Activated T-helper 2 cell treated with anti-CD3 and anti-CD28 coated beads, Interferon-gamma antibody, Interleukin-2, Interleukin-4, amounts not matched to agents 10 μg/mL and 5 μg/mL and 100 μg/mL, durations not matched to agents 14 hours and 24 hours and 36 hours (primary cell): ENCODE measurements at regions of chr14 and their contacts with region 1.

Region 1: DNA sequence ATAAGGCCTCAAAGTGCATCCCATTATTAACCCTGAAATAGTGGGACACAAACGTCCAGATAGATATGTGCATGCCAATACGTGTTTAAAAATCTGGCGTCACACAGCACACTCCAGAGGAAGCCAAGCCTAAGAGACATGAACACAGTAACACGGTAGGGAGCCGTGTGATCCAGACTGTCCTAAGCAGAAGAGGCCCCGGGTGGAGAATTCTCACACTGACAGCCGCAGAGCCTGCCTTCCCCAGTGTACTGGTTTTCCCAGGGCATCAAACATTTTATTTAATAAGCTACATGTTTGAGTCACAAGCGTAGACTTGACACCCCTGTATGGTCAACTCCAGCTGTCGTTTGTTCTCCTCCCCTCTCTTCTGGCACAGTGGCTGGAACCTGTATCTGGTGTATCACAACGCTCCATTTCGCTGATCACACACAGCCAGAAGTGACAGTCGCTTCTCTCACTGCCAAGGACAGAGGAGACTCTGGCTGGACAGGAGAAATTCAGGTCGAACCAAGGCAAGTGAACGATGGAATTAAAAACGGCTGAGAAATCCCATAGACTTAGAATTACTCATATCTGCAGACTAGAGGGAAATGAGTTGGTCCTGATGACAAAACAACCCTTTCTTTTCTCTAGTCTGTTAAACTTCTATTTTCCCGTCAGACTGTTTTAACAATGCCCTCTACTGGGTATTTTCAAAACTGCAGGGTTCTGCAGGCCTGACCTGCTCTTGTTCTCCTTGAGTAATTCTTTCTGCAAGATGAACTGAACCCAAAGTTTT is 359.9 kb downstream of the RGS6 start:
- DNase-seq: no peak
- H3K4me3 Mint-ChIP-seq: no peak overlapping the region
- H3K27ac Mint-ChIP-seq: no peak overlapping the region
- H3K4me1 Mint-ChIP-seq: no peaks in the 10 kb centered on the region
- H3K27me3 Mint-ChIP-seq: peaks cover 20% of the 10 kb centered on the region

Region 2: GRCh38 chr14:72023722-72024407 is 268.2 kb before region 1 on chr14:
- intact Hi-C with region 1: loop called (anchors 1 kb)
- DNase-seq: peak; percentile 40
- H3K4me3 Mint-ChIP-seq: no peak overlapping the region
- H3K27ac Mint-ChIP-seq: no peak overlapping the region
- H3K4me1 Mint-ChIP-seq: peaks cover 10% of the 10 kb centered on the region
- H3K27me3 Mint-ChIP-seq: peaks cover 39% of the 10 kb centered on the region

Region 3: DNA sequence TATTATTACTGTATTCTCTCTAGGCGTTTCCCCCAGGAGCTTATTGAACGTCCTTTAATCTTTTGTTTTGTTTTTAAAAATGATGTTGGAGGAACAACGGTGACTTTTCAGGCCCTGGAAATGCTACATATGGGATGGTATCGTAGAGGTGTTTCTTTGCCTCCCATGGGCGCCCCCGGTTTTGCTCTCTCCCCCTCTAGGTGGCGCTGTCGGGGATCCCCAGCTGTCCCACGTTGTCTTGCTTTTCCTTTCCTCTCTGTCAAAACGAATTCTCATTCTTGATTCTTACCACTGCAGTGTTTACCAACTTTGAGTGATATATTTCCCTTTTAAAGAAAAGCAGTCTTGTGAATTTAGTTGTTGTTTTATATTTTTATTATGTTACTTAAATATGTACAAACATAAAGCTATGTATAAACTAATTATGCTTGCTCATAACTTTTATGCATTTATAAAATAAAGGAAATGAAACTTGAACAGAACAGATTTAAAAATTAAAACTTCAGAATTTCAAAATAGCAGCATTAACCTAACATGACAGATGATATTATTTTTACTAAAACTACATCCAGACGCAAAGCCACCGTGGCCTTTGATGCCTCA is 188.0 kb before region 1 on chr14:
- intact Hi-C with region 1: loop called (anchors 2 kb)
- DNase-seq: peak; percentile 15
- H3K4me3 Mint-ChIP-seq: no peak overlapping the region
- H3K27ac Mint-ChIP-seq: no peak overlapping the region
- H3K4me1 Mint-ChIP-seq: no peaks in the 10 kb centered on the region
- H3K27me3 Mint-ChIP-seq: peaks cover 48% of the 10 kb centered on the region

Region 4: DNA sequence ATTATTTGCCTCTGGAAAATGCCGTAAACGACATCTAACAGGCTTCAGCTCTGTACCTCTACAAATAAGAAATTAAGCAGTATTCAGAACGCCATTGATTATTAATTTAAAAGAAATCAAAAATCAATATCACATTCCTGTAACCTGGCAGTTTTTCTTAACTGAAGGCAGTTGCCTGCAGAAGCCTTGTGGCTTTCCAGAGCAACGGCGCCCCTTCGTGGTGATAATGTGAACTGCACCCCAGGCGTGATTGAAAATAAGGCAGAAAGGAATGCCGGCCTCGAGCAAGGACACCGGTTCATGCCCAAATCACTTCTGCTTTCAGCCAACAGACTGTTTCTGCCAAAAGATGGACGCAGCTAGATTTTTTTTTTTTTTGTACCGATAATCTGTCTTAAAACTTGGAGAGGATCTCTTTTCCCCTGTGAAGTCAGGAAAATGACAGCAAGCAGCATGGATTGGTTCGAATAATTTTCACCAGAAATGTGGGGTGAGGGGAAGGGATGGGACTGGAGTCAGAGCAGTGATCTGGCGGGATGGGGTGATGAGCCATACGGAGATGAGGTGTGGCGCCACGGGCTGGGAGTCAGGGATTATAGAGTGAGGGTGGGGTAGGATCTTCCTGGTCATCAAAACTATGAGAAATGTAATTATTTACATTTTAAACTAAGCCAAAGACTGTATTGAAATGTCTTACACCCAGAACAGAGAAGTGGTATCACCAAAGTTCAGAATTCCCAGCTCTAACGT is 128.8 kb after region 1 on chr14:
- intact Hi-C with region 1: loop called (anchors 5 kb)
- DNase-seq: peak; percentile 71
- H3K4me3 Mint-ChIP-seq: no peak overlapping the region
- H3K27ac Mint-ChIP-seq: no peak overlapping the region
- H3K4me1 Mint-ChIP-seq: peaks cover 16% of the 10 kb centered on the region
- H3K27me3 Mint-ChIP-seq: peaks cover 27% of the 10 kb centered on the region